Activated naive CD4-positive, alpha-beta T cell treated with anti-CD3 and anti-CD28 coated beads for 36 hours (primary cell): ENCODE measurements at regions of chr2 and their contacts with region 1.

Region 1: GRCh38 chr2:27582695-27583389 is at the start of gene ZNF512:
- DNase-seq: peak; percentile 86
- H3K4me3 Mint-ChIP-seq: peak within 1 kb of the TSS; percentile 99
- H3K27ac Mint-ChIP-seq: peak within 1 kb of the TSS; percentile 90
- H3K4me1 Mint-ChIP-seq: peaks cover 46% of the 10 kb centered on the region
- H3K27me3 Mint-ChIP-seq: no peaks in the 10 kb centered on the region
- total RNA-seq, gene ZNF512: 34.7 to 35.8 TPM

Region 2: DNA sequence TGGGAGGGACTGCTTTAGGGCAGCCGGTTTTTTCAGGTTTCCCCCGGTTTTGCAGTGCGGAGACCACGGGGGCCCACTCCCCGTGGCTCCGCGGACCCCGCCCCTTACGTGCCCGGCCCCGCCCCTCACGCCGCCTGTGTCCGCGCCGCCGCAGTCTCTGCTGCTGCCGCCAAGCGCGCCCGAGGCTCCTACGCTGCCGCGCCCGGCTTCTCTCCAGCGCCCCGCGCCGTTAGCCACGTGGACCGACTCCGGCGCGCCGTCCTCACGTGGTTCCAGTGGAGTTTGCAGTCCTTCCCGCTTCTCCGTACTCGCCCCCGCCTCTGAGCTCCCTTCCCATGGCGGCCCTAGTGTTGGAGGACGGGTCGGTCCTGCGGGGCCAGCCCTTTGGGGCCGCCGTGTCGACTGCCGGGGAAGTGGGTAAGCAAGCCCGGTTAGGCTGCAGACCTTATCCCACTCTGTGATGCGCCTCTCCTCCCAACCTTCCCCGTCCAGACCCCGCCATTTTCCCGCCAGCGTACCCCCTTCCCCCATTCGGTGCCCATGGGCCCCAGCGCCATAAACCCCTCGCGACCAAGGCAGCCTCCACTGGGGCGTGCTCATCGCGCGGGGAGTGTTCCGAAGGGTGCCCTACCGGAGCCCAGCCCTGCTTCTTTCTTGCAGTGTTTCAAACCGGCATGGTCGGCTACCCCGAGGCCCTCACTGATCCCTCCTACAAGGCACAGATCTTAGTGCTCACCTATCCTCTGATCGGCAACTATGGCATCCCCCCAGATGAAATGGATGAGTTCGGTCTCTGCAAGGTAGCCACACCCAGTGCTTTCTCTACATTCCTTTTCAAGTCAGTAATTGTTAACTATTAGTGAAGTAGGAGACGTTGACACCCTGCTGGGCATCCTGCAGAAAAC is 365.4 kb before region 1 on chr2 and contains the start of gene CAD:
- CTCF ChIA-PET with region 1: no interaction called
- intact Hi-C with region 1: loop called (anchors 10 kb)
- DNase-seq: peak; percentile 89
- H3K4me3 Mint-ChIP-seq: peak within 1 kb of the TSS; percentile 97
- H3K27ac Mint-ChIP-seq: peak within 1 kb of the TSS; percentile 86
- H3K4me1 Mint-ChIP-seq: peaks cover 43% of the 10 kb centered on the region
- H3K27me3 Mint-ChIP-seq: no peaks in the 10 kb centered on the region
- total RNA-seq, gene CAD: 109 to 112 TPM

Region 3: GRCh38 chr2:27453967-27454366 is 128.9 kb before region 1 on chr2:
- CTCF ChIA-PET with region 1: no interaction called
- intact Hi-C with region 1: no loop called
- DNase-seq: no peak
- H3K4me3 Mint-ChIP-seq: no peak overlapping the region
- H3K27ac Mint-ChIP-seq: no peak overlapping the region
- H3K4me1 Mint-ChIP-seq: peaks cover 3% of the 10 kb centered on the region
- H3K27me3 Mint-ChIP-seq: no peaks in the 10 kb centered on the region

Region 4: DNA sequence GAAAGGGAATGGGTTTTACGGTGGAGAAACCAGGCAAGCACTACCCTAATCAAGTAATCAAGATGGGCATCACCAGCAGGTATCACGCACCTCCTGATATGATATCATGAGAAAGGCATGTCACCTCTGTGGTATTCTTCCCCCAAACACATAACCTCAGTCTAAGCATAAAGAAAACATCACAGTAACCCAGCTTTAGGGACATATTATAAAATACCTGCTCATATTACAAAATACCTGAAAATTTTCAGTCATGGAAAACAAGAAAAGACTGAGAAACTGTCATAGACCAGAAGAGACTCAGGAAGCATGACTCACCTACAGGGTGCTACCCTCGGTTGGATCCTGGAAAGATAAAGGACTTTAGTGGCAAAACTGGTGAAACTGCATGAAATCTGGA is 55.7 kb before region 1 on chr2:
- CTCF ChIA-PET with region 1: no interaction called
- intact Hi-C with region 1: no loop called
- DNase-seq: no peak
- H3K4me3 Mint-ChIP-seq: no peak overlapping the region
- H3K27ac Mint-ChIP-seq: no peak overlapping the region
- H3K4me1 Mint-ChIP-seq: peaks cover 4% of the 10 kb centered on the region
- H3K27me3 Mint-ChIP-seq: peaks cover 7% of the 10 kb centered on the region

Region 5: GRCh38 chr2:27596627-27597026 is 13.8 kb after region 1 on chr2:
- CTCF ChIA-PET with region 1: no interaction called
- intact Hi-C with region 1: no loop called
- DNase-seq: no peak
- H3K4me3 Mint-ChIP-seq: no peak overlapping the region
- H3K27ac Mint-ChIP-seq: no peak overlapping the region
- H3K4me1 Mint-ChIP-seq: peaks cover 43% of the 10 kb centered on the region
- H3K27me3 Mint-ChIP-seq: no peaks in the 10 kb centered on the region

Region 6: DNA sequence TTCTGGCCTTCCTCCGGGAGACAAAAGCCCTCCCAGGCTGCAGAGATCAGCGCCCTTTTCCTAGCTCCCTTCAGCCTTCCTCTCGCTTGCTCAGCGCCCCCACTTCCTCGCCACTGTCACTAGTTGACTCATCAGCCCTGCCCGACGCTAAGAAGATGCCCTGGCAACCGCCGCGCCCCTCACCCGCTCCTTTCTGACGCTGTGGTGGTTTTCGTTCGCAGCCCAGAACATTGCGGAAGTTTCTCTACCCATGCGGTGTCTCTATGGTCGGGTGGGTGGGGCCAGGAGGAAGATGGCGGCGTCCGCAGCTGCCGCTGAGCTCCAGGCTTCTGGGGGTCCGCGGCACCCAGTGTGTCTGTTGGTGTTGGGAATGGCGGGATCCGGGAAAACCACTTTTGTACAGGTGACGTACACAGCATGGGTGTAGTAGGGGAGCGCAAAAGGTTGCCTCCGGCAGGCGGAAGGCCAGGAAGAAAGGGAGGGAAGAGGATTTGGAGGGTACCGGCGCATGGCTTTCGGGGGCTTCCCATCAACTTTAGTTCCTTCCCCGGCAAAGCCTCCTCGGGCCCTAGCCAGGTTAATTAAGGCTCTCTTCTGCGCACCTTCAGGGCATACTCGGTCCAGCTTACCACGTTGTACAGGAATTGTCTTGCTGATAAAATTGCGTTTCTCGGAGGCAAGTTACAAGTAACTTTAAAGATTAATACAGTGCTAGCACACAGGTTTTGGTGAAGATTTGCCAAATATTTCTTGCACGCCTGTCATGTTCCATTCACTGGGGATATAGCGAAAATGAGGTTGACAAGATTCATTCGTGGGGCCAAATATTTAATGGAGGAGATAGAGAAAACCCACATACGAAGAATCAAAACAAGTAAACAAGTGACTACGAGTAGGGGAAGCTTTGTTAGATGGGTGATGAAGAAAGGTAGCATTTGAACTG is 46.2 kb after region 1 on chr2 and contains the starts of genes CCDC121 and GPN1:
- CTCF ChIA-PET with region 1: interaction called, 3 read pairs
- intact Hi-C with region 1: loop called (anchors 1 kb)
- DNase-seq: peak; percentile 98
- H3K4me3 Mint-ChIP-seq: no peak within 1 kb of the TSS
- H3K27ac Mint-ChIP-seq: peak within 1 kb of the TSS; percentile 52
- H3K4me1 Mint-ChIP-seq: peaks cover 13% of the 10 kb centered on the region
- H3K27me3 Mint-ChIP-seq: no peaks in the 10 kb centered on the region
- total RNA-seq, gene CCDC121: 0.17 to 0.30 TPM
- total RNA-seq, gene GPN1: 44.9 to 45.1 TPM

Region 7: DNA sequence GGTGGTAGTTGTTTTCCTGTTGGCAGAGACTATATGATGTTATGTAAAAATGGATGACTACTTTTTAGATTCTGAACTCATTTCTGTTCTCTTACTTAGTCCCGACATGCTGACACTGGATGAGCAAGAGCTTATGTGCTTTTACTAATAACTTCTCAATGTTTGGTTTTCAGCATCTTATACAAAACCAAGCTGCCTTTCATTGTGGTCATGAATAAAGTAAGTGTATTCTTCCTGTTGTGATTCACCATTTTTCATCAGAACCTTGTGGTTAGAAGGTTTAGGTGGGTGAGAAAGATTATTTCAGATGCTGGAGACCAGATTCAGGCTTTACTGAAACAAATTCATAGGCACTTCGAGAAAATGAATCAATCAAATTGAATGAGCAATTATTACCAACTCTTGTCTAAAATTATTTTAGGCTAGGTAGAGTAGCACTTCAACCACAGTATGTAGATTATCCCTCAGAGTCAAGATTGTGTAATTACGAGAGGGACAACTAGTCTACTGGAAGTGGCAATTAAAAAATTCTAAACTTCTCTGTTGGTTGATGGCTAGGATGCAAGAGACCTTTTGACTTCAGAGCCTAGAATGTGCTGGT is 55.3 kb after region 1 on chr2:
- CTCF ChIA-PET with region 1: no interaction called
- intact Hi-C with region 1: loop called (anchors 2 kb)
- DNase-seq: peak; percentile 17
- H3K4me3 Mint-ChIP-seq: peak overlapping the region; percentile 28
- H3K27ac Mint-ChIP-seq: peak overlapping the region; percentile 92
- H3K4me1 Mint-ChIP-seq: peaks cover 20% of the 10 kb centered on the region
- H3K27me3 Mint-ChIP-seq: no peaks in the 10 kb centered on the region

Region 8: GRCh38 chr2:27663463-27664249 is 80.8 kb after region 1 on chr2 and contains the starts of genes SLC4A1AP and SUPT7L:
- CTCF ChIA-PET with region 1: no interaction called
- intact Hi-C with region 1: loop called (anchors 1 kb)
- DNase-seq: peak; percentile 76
- H3K4me3 Mint-ChIP-seq: peak within 1 kb of the TSS; percentile 98
- H3K27ac Mint-ChIP-seq: peak within 1 kb of the TSS; percentile 99
- H3K4me1 Mint-ChIP-seq: peaks cover 47% of the 10 kb centered on the region
- H3K27me3 Mint-ChIP-seq: no peaks in the 10 kb centered on the region
- total RNA-seq, gene SLC4A1AP: 21.2 to 22.2 TPM
- total RNA-seq, gene SUPT7L: 27.8 to 29.7 TPM

Region 9: DNA sequence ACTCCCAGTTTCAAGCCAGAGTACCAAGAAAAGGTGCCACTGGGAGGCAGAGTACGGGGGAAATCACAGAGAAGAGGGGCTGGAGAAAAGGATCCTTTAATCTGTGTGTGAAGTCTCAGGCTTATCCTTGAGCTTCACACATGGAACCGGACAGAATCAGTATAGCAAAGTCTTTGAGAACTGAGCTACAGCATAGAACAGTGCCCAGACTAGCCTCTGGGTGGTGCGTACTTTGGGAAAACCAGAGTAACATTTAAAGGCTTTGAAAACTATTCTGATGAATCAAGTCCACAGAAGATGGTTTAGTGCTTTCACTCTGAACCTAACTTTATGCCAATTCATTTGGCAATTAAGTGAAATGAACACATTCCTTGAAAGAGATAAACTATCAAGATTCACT is 390.8 kb after region 1 on chr2:
- CTCF ChIA-PET with region 1: no interaction called
- intact Hi-C with region 1: no loop called
- DNase-seq: no peak
- H3K4me3 Mint-ChIP-seq: no peak overlapping the region
- H3K27ac Mint-ChIP-seq: no peak overlapping the region
- H3K4me1 Mint-ChIP-seq: peaks cover 28% of the 10 kb centered on the region
- H3K27me3 Mint-ChIP-seq: no peaks in the 10 kb centered on the region